Esophagus muscularis mucosa (tissue), 4 donors: ENCODE measurements at regions of chr3 and their contacts with region 1.

Region 1: DNA sequence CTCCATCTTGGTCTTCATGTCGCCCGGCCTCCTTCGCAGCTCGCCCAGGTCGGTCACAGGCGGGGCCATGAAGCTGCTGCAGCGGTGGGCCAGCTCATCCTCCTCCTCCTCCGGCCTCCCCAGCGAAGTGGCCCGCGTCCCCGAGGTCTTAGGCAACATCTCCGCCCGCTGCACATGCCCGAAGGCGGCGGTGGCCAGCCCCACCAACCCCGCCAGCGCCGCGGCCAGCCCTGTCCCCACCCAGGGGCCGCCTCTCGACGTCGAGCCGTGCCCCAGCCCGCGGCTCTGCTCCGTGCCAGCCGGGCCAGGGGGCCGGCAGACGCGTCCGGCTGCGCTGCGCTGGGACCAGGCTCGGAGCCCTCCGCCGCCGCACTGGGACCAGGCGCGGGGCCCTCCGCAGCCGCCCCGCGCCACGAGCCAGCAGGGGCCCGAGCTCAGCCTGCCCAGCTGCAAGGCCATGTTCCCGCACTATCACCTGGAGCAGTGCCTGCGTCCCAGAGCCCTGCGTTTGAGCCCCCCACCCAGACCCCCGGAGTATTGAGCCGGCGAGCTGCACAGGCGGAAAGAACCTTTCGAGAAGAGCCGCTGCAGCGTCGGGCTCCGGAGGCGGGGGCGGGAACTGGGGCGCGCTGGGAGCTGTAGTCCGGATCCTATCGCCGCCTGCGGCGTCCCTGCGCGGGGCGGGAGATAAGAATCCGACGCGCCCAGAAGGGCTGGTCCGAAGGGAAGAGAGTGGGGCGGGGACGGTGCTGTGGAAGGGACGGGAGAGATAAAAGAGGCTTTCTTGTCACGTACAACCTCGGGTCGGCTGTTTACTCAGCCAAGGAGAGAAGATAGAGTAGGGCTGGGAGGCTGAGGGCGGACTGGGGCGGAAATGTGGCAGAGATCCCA is at the start of gene CPOX:
- DNase-seq: peak; percentile 95
- H3K4me3 ChIP-seq: peak within 1 kb of the TSS; percentile 81 to 96 (median 92)
- H3K27ac ChIP-seq: peak within 1 kb of the TSS; percentile 79 to 87 (median 83)
- H3K4me1 ChIP-seq: peaks cover 15 to 27% (median 20%) of the 10 kb centered on the region in 4 donors
- H3K27me3 ChIP-seq: no peaks in the 10 kb centered on the region
- CTCF ChIP-seq: no peak
- EP300 ChIP-seq: no peak
- POLR2A ChIP-seq: no peak
- total RNA-seq, gene CPOX: 7.6 to 21.4 (median 14.7) TPM

Region 2: DNA sequence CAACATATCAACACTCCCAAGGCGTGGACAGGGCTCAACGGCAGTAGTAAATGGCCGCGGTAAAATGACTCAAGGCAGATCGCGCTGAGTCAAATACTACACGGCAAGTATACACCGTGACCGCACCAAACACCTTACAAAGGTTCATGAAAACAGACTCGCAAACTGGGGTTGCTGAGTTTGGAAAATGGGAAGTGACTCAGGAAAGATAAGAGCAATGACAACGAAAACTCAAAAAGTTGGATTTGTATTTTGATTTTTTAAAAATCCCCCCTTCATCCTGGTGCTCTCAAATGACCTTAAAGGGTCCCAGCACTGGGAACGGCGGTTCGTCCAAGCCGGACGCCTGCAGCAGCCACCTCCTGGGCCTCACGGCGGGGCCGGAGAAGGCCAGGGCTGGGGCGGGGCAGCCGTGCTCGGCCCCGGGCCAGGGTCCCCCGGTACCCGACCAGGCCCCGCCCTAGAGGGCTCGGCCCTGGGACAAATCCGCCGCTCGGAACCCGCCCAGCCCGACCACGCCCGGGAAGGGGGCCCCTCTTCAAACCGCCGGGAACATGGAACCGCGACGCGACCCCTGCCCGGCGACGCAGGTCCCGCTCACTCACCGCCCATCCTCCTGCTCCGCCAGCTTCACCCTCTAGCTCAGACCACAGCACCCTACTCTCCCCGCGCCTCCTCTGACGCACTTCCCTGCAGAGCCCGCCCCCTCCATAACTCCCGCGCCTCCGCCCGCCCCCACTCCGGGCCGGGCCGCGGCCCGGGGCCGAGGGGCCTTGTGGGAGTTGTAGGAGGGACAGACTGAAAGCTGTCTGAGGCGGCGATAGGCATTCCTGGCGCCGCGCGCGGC is 70.8 kb before region 1 on chr3 and contains the start of gene CLDND1:
- intact Hi-C with region 1: loop called (anchors 5 kb)
- DNase-seq: peak; percentile 99
- H3K4me3 ChIP-seq: peak within 1 kb of the TSS; percentile 80 to 92 (median 84)
- H3K27ac ChIP-seq: peak within 1 kb of the TSS; percentile 92 to 99 (median 94)
- H3K4me1 ChIP-seq: peaks cover 11 to 46% (median 33%) of the 10 kb centered on the region in 4 donors
- H3K27me3 ChIP-seq: no peaks in the 10 kb centered on the region
- CTCF ChIP-seq: no peak
- EP300 ChIP-seq: no peak
- POLR2A ChIP-seq: peak; percentile 65
- total RNA-seq, gene CLDND1: 84.6 to 191 (median 139) TPM

Region 3: DNA sequence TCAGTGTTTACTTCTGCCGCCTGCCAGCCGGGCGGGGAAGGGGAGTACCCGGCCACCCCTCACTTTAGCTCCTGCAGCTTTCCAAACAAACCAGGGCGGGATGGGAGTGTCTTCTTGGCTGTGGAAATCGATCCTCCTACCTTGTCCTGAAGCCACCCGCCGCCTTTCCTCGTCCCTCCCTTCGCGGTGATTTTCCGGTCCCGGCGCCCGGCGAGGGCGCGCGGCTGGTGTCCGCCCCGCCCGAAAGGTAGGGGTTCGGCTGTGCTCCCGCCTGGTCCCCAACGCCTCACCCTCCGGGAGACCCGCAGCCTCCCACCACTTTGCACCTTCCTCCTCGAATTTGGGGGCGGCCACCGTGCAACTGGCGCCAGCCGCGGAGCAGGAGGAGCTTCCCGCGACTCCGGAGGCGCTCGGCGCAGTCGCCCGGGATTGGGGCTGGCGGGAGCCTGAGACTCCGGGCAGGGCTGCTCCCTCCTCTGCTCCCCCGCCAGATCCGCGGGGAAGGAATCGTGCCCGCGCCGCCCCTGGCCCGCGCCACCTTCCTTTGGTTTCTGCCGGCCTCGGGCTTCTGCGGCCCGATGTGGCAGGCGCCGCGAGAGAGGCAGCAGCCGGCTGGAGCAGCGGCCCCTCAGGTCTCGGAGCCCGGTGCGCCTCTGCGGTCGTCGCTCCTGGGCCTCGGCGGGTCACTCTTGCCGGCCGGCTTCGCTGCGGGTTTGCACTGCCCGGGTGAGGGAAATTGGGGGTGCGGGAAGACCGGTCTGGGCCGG is 139.2 kb after region 1 on chr3:
- intact Hi-C with region 1: loop called (anchors 10 kb)
- DNase-seq: no peak
- H3K4me3 ChIP-seq: peak overlapping the region; percentile 64 to 81 (median 74)
- H3K27ac ChIP-seq: peak overlapping the region; percentile 62 to 78 (median 74)
- H3K4me1 ChIP-seq: peaks cover 9 to 31% (median 23%) of the 10 kb centered on the region in 4 donors
- H3K27me3 ChIP-seq: no peaks in the 10 kb centered on the region
- CTCF ChIP-seq: no peak
- EP300 ChIP-seq: no peak
- POLR2A ChIP-seq: no peak